ENCODE measurements at regions of chr18 and their contacts with region 1.

Region 1: GRCh38 chr18:43719351-43719750 is 442.1 kb upstream of the SYT4 start:
- DNase-seq: peak; percentile 82
- H3K4me3 Mint-ChIP-seq: peak overlapping the region; percentile 43
- H3K27ac Mint-ChIP-seq: peak overlapping the region; percentile 87
- H3K4me1 Mint-ChIP-seq: peaks cover 27% of the 10 kb centered on the region
- H3K27me3 Mint-ChIP-seq: no peaks in the 10 kb centered on the region
- CTCF ChIP-seq: no peak

Region 2: DNA sequence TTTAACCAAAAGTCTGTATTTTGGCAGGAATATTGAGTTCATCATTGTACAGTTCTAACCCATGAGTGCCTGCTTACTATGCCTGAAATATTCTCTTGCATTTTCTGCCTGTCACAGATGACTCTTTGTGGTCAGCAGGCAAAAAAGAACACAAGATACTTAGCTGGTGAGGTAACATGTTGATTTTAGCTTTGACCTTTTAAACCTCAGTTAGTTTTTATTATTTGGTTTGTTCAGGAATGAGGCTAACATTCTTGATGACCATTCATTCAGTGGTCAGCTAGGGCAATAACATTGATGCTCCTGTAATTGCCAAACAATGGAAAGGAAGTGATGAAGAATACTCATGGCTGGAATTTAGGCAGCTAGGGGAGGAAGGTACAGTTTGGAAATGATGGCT is 1273.2 kb before region 1 on chr18:
- CTCF ChIA-PET with region 1: no interaction called
- intact Hi-C with region 1: no loop called
- DNase-seq: no peak
- H3K4me3 Mint-ChIP-seq: no peak overlapping the region
- H3K27ac Mint-ChIP-seq: no peak overlapping the region
- H3K4me1 Mint-ChIP-seq: no peaks in the 10 kb centered on the region
- H3K27me3 Mint-ChIP-seq: no peaks in the 10 kb centered on the region
- CTCF ChIP-seq: no peak

Region 3: GRCh38 chr18:42635378-42636048 is 1083.8 kb before region 1 on chr18:
- CTCF ChIA-PET with region 1: no interaction called
- intact Hi-C with region 1: no loop called
- DNase-seq: no peak
- H3K4me3 Mint-ChIP-seq: no peak overlapping the region
- H3K27ac Mint-ChIP-seq: no peak overlapping the region
- H3K4me1 Mint-ChIP-seq: no peaks in the 10 kb centered on the region
- H3K27me3 Mint-ChIP-seq: no peaks in the 10 kb centered on the region
- CTCF ChIP-seq: no peak

Region 4: DNA sequence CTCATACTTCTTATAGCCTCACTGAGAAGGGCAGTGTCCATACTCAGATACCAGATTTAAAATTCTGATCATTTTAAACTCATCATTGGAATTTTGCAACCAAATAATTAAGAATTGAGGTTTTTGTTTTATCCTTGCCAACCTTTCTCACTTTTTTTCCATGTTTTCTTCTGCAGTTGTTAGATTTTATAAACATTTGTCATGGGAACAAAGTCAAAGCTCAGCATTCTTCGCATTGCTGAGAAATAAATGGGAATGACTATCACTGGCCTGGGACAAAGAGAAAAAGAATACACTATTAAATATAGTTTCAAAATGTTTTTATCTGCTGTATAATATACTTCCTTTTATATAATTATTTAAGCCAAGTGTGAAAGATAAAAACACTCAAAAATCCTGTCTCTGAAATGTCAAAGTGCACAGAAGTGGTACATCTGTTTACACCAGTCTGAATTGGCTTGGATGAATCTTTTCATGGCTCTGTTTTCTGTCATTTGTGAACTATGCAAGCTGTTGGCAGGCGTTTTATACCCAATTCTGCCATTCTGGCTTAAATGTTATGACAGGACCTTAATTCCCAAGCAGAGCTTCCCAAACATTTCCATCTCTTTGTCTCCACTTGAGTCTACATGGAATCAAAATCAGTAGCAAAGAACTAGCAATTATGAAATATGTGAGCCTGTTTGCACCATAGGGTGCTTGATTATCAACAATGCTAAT is 192.8 kb before region 1 on chr18:
- CTCF ChIA-PET with region 1: no interaction called
- intact Hi-C with region 1: no loop called
- DNase-seq: no peak
- H3K4me3 Mint-ChIP-seq: no peak overlapping the region
- H3K27ac Mint-ChIP-seq: no peak overlapping the region
- H3K4me1 Mint-ChIP-seq: peaks cover 14% of the 10 kb centered on the region
- H3K27me3 Mint-ChIP-seq: no peaks in the 10 kb centered on the region
- CTCF ChIP-seq: no peak

Region 5: GRCh38 chr18:43661570-43661969 is 57.8 kb before region 1 on chr18:
- CTCF ChIA-PET with region 1: interaction called, 3 read pairs
- intact Hi-C with region 1: loop called (anchors 5 kb)
- DNase-seq: peak; percentile 61
- H3K4me3 Mint-ChIP-seq: no peak overlapping the region
- H3K27ac Mint-ChIP-seq: peak overlapping the region; percentile 70
- H3K4me1 Mint-ChIP-seq: peaks cover 17% of the 10 kb centered on the region
- H3K27me3 Mint-ChIP-seq: no peaks in the 10 kb centered on the region
- CTCF ChIP-seq: peak; percentile 58